Psoas muscle (tissue), 8 donors: ENCODE measurements at regions of chr15 and their contacts with region 1.

Region 1: GRCh38 chr15:60362321-60363086 is 35.3 kb downstream of the ANXA2 start:
- DNase-seq: no peak
- ATAC-seq: peak in 3 of 4 donors; percentile 21 to 44 (median 37)
- H3K4me3 ChIP-seq: no peak overlapping the region
- H3K27ac ChIP-seq: peak overlapping the region; percentile 73
- H3K4me1 ChIP-seq: peaks cover 55% of the 10 kb centered on the region
- H3K27me3 ChIP-seq: no peaks in the 10 kb centered on the region
- CTCF ChIP-seq: no peak

Region 2: DNA sequence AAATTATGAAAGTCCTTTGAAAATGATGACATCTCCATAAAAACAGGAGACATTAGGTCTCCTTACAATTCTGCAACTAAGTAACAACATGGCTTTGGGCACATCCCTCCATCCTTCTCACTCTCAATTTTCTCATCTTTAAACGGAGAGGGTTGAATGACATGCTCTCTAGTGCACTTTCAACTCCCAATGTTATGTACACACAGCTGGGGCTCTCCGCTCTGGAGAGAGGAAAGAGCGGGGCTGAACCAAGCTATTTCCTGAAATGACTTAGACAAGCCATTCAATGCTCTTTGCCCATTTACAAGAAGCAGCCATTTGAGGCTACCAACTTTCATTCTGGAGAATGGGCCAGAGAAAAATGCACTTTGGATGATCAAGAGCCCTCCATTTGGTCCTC is 529.1 kb before region 1 on chr15:
- intact Hi-C with region 1: no loop called
- DNase-seq: no peak
- ATAC-seq: no peak
- H3K4me3 ChIP-seq: no peak overlapping the region
- H3K27ac ChIP-seq: no peak overlapping the region
- H3K4me1 ChIP-seq: no peaks in the 10 kb centered on the region
- H3K27me3 ChIP-seq: peaks cover 0 to 2% (median 0%) of the 10 kb centered on the region in 3 donors
- CTCF ChIP-seq: no peak

Region 3: DNA sequence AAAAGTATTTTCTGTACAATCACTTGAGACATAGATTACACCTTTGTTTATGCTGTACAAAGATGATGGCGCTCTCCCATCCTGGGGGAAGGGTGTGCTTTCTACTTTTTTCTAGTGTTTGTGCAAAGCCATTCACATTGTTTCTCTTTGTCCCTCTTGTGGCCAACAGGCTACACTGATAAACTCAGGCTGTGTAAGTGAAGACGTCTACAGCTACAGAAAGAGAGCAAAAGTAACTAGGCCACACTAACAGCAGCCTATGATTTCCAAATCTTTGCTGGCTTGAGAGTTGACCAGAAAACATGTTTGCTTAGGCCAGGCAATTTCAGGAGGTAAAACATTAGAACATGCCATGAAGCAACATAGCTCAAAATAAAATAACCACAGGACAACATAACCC is 283.3 kb before region 1 on chr15:
- intact Hi-C with region 1: no loop called
- DNase-seq: no peak
- ATAC-seq: no peak
- H3K4me3 ChIP-seq: no peak overlapping the region
- H3K27ac ChIP-seq: no peak overlapping the region
- H3K4me1 ChIP-seq: no peaks in the 10 kb centered on the region
- H3K27me3 ChIP-seq: peaks cover 0 to 5% (median 2%) of the 10 kb centered on the region in 3 donors
- CTCF ChIP-seq: no peak

Region 4: GRCh38 chr15:60237421-60237820 is 125.1 kb before region 1 on chr15:
- intact Hi-C with region 1: no loop called
- DNase-seq: no peak
- ATAC-seq: no peak
- H3K4me3 ChIP-seq: no peak overlapping the region
- H3K27ac ChIP-seq: no peak overlapping the region
- H3K4me1 ChIP-seq: no peaks in the 10 kb centered on the region
- H3K27me3 ChIP-seq: no peaks in the 10 kb centered on the region
- CTCF ChIP-seq: no peak

Region 5: GRCh38 chr15:60397772-60398445 is 35.4 kb after region 1 on chr15 and contains the start of gene ANXA2:
- intact Hi-C with region 1: loop called in 1 of 2 experiments (anchors 5 kb)
- DNase-seq: peak; percentile 91 to 95
- ATAC-seq: peak; percentile 81 to 84 (median 82)
- H3K4me3 ChIP-seq: peak within 1 kb of the TSS; percentile 80
- H3K27ac ChIP-seq: peak within 1 kb of the TSS; percentile 93
- H3K4me1 ChIP-seq: peaks cover 35% of the 10 kb centered on the region
- H3K27me3 ChIP-seq: no peaks in the 10 kb centered on the region
- CTCF ChIP-seq: no peak
- total RNA-seq, gene ANXA2: 140 to 522 (median 378) TPM

Region 6: GRCh38 chr15:60408438-60409105 is 46.1 kb after region 1 on chr15:
- intact Hi-C with region 1: no loop called
- DNase-seq: no peak
- ATAC-seq: peak; percentile 85 to 90 (median 88)
- H3K4me3 ChIP-seq: no peak overlapping the region
- H3K27ac ChIP-seq: peak overlapping the region; percentile 75
- H3K4me1 ChIP-seq: peaks cover 25% of the 10 kb centered on the region
- H3K27me3 ChIP-seq: no peaks in the 10 kb centered on the region
- CTCF ChIP-seq: no peak

Region 7: DNA sequence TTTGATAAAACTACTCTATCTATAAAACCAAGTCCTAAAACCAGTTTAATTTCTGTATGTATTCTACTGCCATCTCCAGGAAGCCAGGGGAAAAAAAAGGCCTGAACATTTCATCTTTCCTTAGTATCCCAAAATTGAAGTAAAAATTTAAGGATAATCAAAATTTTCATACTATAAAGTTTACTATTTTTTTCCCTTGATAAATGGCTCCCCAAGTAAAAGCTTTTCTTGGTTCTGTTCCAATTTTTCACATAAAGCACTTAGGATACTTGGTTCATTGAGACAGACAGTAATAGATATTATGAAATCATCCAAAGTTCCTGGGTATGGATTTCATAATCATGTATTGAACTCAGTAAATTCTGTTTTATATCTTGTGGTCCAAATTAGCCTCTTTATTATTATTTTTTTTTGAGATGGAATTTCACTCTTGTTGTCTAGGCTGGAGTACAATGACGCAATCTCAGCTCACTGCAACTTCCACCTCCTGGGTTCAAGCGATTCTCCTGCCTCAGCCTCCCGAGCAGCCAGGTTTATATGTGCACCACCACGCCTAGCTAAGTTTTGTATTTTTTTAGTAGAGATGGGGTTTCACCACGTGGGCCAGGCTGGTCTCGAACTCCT is 81.9 kb after region 1 on chr15:
- intact Hi-C with region 1: loop called (anchors 2 to 5 kb)
- DNase-seq: no peak
- ATAC-seq: peak in 2 of 4 donors; percentile 52 to 79
- H3K4me3 ChIP-seq: no peak overlapping the region
- H3K27ac ChIP-seq: no peak overlapping the region
- H3K4me1 ChIP-seq: no peaks in the 10 kb centered on the region
- H3K27me3 ChIP-seq: no peaks in the 10 kb centered on the region
- CTCF ChIP-seq: peak; percentile 65